ENCODE measurements at regions of chr2 and their contacts with region 1.

Region 1: GRCh38 chr2:228321015-228321414 is 139.5 kb upstream of the SPHKAP start:
- DNase-seq: no peak
- ATAC-seq: no peak
- H3K4me3 Mint-ChIP-seq: no peak overlapping the region
- H3K27ac Mint-ChIP-seq: no peak overlapping the region
- H3K4me1 Mint-ChIP-seq: no peaks in the 10 kb centered on the region
- H3K27me3 Mint-ChIP-seq: no peaks in the 10 kb centered on the region

Region 2: DNA sequence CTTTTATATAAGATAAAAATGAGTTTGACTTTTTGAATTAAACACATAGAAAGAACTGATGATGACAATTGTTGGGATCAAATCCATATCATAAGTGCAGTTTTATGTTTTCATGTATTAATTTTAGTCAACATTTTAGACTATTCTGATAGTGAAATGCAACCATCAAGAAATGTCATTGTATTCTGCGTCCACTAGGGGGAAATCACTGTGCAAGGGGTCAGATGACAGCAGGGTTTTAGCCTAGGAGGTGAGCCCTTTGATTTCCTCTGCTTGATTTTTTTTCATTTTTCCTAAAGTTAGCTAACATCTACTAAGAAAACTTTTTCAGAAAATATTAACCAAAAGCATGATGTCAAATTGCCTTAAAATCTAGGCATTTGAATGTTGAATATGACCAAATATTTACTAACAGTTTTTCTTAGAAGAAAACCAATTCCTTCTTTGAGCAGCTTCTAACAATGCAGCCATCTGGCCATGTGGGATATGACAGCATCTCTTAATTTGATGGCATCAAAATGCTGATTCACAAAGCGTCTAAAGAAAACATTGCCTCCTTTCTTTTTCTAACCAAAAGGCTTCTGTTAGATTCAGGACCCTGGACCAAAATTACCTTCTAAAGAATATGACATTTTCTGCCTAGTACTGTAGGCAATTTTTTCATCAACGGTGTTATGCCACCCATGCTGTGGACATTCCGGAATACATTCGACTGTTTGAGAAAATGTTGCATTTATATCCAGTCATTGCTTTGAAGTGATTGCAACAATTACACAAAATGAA is 281.1 kb before region 1 on chr2:
- CTCF ChIA-PET with region 1: no interaction called
- POLR2A ChIA-PET with region 1: no interaction called
- intact Hi-C with region 1: loop called in 1 of 2 experiments (anchors 5 kb)
- DNase-seq: no peak
- ATAC-seq: no peak
- H3K4me3 Mint-ChIP-seq: no peak overlapping the region
- H3K27ac Mint-ChIP-seq: no peak overlapping the region
- H3K4me1 Mint-ChIP-seq: no peaks in the 10 kb centered on the region
- H3K27me3 Mint-ChIP-seq: no peaks in the 10 kb centered on the region

Region 3: DNA sequence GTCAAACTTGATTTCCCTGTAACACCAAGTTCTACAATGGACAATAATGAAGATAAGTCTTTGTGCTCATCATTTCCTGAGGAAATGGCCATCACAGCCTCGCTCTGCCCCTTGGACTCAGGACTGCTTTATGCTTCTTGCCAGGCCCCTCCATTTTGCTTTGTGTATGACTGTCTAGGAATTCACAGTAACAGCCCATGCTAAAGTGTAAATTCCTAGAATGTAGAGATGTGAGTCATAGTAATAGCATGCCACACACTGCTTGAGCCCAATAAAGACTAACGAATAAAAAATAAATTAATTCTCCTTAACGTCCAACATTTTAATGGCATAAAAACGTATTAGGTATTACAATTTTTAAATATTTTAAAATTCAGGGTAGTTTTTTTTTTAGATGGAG is 723.6 kb after region 1 on chr2:
- CTCF ChIA-PET with region 1: no interaction called
- POLR2A ChIA-PET with region 1: no interaction called
- intact Hi-C with region 1: no loop called
- DNase-seq: no peak
- ATAC-seq: no peak
- H3K4me3 Mint-ChIP-seq: no peak overlapping the region
- H3K27ac Mint-ChIP-seq: no peak overlapping the region
- H3K4me1 Mint-ChIP-seq: no peaks in the 10 kb centered on the region
- H3K27me3 Mint-ChIP-seq: no peaks in the 10 kb centered on the region

Measured in activated CD4-positive, alpha-beta T cell treated with anti-CD3 and anti-CD28 coated beads for 36 hours (primary cell).